ENCODE measurements at regions of chr10 and their contacts with region 1.

Region 1: DNA sequence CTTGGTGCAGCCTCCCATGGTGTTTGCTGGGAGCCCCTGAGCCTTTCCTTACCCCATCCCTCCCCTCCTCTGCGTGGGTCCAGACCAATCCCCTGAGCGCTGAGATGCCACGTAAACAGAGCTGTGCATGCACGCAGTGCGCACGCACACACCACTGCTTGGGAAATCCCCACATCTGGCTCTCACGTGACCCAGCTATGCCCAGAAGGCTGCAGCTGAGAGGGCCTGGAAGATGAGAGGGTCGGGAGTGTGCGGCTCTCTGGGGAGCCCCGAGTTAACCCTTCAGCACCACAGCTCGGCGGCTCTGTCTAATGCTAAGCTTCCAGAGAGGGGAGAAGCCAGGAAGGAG is 177.2 kb downstream of the SH3PXD2A start:
- DNase-seq: no peak
- H3K4me3 ChIP-seq: no peak overlapping the region
- H3K27ac ChIP-seq: peak overlapping the region; percentile 62
- H3K4me1 ChIP-seq: peaks cover 44% of the 10 kb centered on the region
- H3K27me3 ChIP-seq: no peaks in the 10 kb centered on the region
- CTCF ChIP-seq: no peak

Region 2: GRCh38 chr10:102090772-102091171 is 1587.4 kb before region 1 on chr10:
- CTCF ChIA-PET with region 1: no interaction called
- dilution Hi-C with region 1: no loop called
- in situ Hi-C with region 1: no loop called
- intact Hi-C with region 1: no loop called
- DNase-seq: peak; percentile 45
- H3K4me3 ChIP-seq: no peak overlapping the region
- H3K27ac ChIP-seq: no peak overlapping the region
- H3K4me1 ChIP-seq: no peaks in the 10 kb centered on the region
- H3K27me3 ChIP-seq: no peaks in the 10 kb centered on the region
- CTCF ChIP-seq: no peak

Region 3: GRCh38 chr10:103605359-103606095 is 72.6 kb before region 1 on chr10:
- CTCF ChIA-PET with region 1: no interaction called
- dilution Hi-C with region 1: loop called (anchors 5 kb)
- in situ Hi-C with region 1: no loop called
- intact Hi-C with region 1: no loop called
- DNase-seq: no peak
- H3K4me3 ChIP-seq: no peak overlapping the region
- H3K27ac ChIP-seq: no peak overlapping the region
- H3K4me1 ChIP-seq: no peaks in the 10 kb centered on the region
- H3K27me3 ChIP-seq: no peaks in the 10 kb centered on the region
- CTCF ChIP-seq: peak; percentile 64 to 67

Region 4: GRCh38 chr10:103712570-103713498 is 34.7 kb after region 1 on chr10:
- CTCF ChIA-PET with region 1: no interaction called
- dilution Hi-C with region 1: no loop called
- in situ Hi-C with region 1: no loop called
- intact Hi-C with region 1: no loop called
- DNase-seq: peak; percentile 74
- H3K4me3 ChIP-seq: no peak overlapping the region
- H3K27ac ChIP-seq: peak overlapping the region; percentile 76
- H3K4me1 ChIP-seq: peaks cover 85% of the 10 kb centered on the region
- H3K27me3 ChIP-seq: no peaks in the 10 kb centered on the region
- CTCF ChIP-seq: peak; percentile 72 to 89

Region 5: DNA sequence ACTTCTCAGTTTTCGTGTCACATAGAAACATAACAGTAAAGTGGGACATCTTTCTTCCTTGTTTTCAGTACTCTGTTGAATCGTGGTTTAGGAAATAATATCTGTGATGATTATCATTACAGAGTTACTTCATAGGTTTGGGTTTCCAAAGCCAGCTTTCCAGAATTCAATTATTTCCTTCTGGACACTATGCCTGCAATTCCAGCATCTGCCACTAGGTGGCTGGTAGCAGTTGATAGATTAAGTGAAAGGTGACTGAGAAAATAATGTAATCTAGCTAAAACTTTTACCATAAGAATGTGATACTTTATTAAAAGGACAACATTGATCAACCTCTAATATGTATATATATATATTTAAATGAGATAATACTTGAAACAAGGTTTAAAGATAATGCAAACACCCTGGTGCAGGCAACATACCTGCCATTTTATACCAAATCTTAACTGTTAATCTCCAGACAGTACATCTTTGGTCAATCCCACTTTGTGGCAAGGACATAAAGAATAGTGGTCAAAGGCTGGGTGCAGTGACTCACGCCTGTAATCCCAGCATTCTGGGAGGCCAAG is 74.6 kb after region 1 on chr10:
- CTCF ChIA-PET with region 1: no interaction called
- dilution Hi-C with region 1: no loop called
- in situ Hi-C with region 1: no loop called
- intact Hi-C with region 1: no loop called
- DNase-seq: no peak
- H3K4me3 ChIP-seq: no peak overlapping the region
- H3K27ac ChIP-seq: no peak overlapping the region
- H3K4me1 ChIP-seq: peaks cover 41% of the 10 kb centered on the region
- H3K27me3 ChIP-seq: no peaks in the 10 kb centered on the region
- CTCF ChIP-seq: peak; percentile 78 to 91